ENCODE measurements at regions of chr1 and their contacts with region 1.

Region 1: GRCh38 chr1:109984456-109985275 is at the start of gene AHCYL1:
- DNase-seq: peak; percentile 94
- ATAC-seq: peak; percentile 95
- H3K4me3 ChIP-seq: peak within 1 kb of the TSS; percentile 79
- H3K27ac ChIP-seq: peak within 1 kb of the TSS; percentile 76
- H3K4me1 ChIP-seq: peaks cover 7% of the 10 kb centered on the region
- H3K27me3 ChIP-seq: no peaks in the 10 kb centered on the region
- CTCF ChIP-seq: peak; percentile 94 to 99 (median 95); a peak in 5 of 6 replicates
- EP300 ChIP-seq: peak in 1 of 2 experiments; percentile 54; a peak in 1 of 4 replicates
- POLR2A ChIP-seq: peak; percentile 98
- RAD21 ChIP-seq: peak; percentile 98
- polyA plus RNA-seq, gene AHCYL1: 24.7 to 26.1 TPM

Region 2: GRCh38 chr1:109636201-109636952 is 348.3 kb before region 1 on chr1:
- CTCF ChIA-PET with region 1: interaction called, 147 read pairs
- POLR2A ChIA-PET with region 1: no interaction called
- RAD21 ChIA-PET with region 1: interaction called, 66 read pairs
- SMC1A ChIA-PET with region 1: interaction called, 95 read pairs
- in situ Hi-C with region 1: loop called (anchors 5 kb)
- intact Hi-C with region 1: loop called (anchors 5 kb)
- DNase-seq: no peak
- ATAC-seq: no peak
- H3K4me3 ChIP-seq: no peak overlapping the region
- H3K27ac ChIP-seq: no peak overlapping the region
- H3K4me1 ChIP-seq: peaks cover 14% of the 10 kb centered on the region
- H3K27me3 ChIP-seq: no peaks in the 10 kb centered on the region
- CTCF ChIP-seq: no peak
- EP300 ChIP-seq: no peak
- POLR2A ChIP-seq: no peak
- RAD21 ChIP-seq: no peak

Region 3: GRCh38 chr1:109655601-109656519 is 328.8 kb before region 1 on chr1 and contains the start of gene GSTM4:
- CTCF ChIA-PET with region 1: interaction called, 53 read pairs
- POLR2A ChIA-PET with region 1: no interaction called
- RAD21 ChIA-PET with region 1: interaction called, 34 read pairs
- SMC1A ChIA-PET with region 1: interaction called, 15 read pairs
- in situ Hi-C with region 1: no loop called
- intact Hi-C with region 1: loop called (anchors 5 kb)
- DNase-seq: peak; percentile 47
- ATAC-seq: peak; percentile 95
- H3K4me3 ChIP-seq: peak within 1 kb of the TSS; percentile 75
- H3K27ac ChIP-seq: peak within 1 kb of the TSS; percentile 60
- H3K4me1 ChIP-seq: 0 out of 2 replicates have a peak, but pooled peaks cover 4% of the 10 kb centered on the region
- H3K27me3 ChIP-seq: no peaks in the 10 kb centered on the region
- CTCF ChIP-seq: no peak
- EP300 ChIP-seq: no peak
- POLR2A ChIP-seq: peak; percentile 77
- RAD21 ChIP-seq: no peak
- polyA plus RNA-seq, gene GSTM4: 16.9 to 17.0 TPM

Region 4: DNA sequence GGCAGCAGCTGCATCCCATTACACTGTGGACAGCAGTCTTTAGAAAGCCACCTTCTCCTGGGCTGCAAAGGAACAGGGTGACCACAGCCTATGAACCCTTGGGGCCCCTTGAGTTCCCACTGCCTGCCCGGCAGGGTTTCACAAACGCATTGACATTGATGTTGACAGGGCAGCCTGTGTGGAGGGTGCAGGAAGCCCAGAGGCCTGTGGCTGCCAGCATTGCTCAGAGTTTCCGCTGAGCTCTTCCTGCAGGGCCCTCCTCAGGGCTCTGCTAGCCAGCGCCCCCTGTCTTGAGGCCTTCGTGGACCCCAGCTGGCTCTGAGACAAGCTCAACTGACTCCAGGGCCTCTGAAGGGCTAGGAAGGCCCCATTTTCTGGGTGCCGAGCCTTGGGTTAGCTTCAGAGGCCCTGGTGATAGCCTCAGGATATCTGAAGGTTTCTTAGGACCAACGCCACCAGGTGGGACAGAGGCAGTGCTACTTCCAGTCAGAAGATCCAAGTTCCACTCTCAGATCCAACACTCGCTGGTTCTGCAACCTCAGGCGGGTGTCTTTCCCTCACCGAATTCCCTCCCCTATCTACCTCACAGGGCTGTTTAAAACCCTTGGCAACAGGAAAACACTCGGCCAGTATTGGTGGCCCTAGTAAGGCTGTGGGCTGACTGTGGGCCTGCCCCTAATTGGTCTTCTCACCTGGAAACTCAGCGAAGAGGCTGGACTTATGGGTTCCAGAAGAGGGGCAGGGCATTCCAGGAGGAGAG is 193.8 kb before region 1 on chr1:
- CTCF ChIA-PET with region 1: interaction called, 759 read pairs
- POLR2A ChIA-PET with region 1: interaction called, 3 read pairs
- RAD21 ChIA-PET with region 1: interaction called, 18 read pairs
- SMC1A ChIA-PET with region 1: interaction called, 431 read pairs
- in situ Hi-C with region 1: no loop called
- intact Hi-C with region 1: no loop called
- DNase-seq: peak; percentile 23
- ATAC-seq: peak; percentile 88
- H3K4me3 ChIP-seq: no peak overlapping the region
- H3K27ac ChIP-seq: peak overlapping the region; percentile 22
- H3K4me1 ChIP-seq: peaks cover 11% of the 10 kb centered on the region
- H3K27me3 ChIP-seq: no peaks in the 10 kb centered on the region; a peak in 1 of 4 replicates
- CTCF ChIP-seq: peak; percentile 32 to 51 (median 37); a peak in 5 of 6 replicates
- EP300 ChIP-seq: 0 out of 4 replicates have a peak, but pooled peaks of 1 of the 2 experiments have one; percentile 8
- POLR2A ChIP-seq: peak; percentile 49
- RAD21 ChIP-seq: peak; percentile 35; the same call in 1 of the 2 replicates

Region 5: DNA sequence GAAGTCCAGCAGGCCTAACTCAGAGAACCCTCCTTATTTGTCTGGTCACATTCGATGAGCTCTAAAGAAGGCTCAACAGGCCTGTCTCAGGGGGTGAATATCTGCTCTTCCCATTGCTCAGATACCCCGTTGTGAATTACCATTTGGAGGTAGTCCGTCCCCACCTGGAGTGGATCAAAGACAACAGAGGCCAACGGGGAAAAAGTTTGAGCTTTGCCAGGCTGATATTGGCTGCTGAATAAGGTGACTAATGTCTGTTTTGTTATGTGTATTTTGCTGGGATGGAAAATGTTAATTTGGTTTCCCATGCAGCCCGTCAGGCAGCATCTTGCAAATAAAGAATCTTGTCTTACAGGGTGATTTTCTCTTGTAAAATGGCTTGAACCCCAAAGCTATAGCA is 151.7 kb before region 1 on chr1:
- CTCF ChIA-PET with region 1: interaction called, 10 read pairs
- POLR2A ChIA-PET with region 1: no interaction called
- RAD21 ChIA-PET with region 1: no interaction called
- SMC1A ChIA-PET with region 1: interaction called, 4 read pairs
- in situ Hi-C with region 1: no loop called
- intact Hi-C with region 1: no loop called
- DNase-seq: no peak
- ATAC-seq: no peak
- H3K4me3 ChIP-seq: no peak overlapping the region
- H3K27ac ChIP-seq: no peak overlapping the region
- H3K4me1 ChIP-seq: no peaks in the 10 kb centered on the region
- H3K27me3 ChIP-seq: no peaks in the 10 kb centered on the region; a peak in 1 of 4 replicates
- CTCF ChIP-seq: no peak
- EP300 ChIP-seq: no peak
- POLR2A ChIP-seq: no peak
- RAD21 ChIP-seq: no peak

Region 6: GRCh38 chr1:109959974-109960744 is 24.5 kb before region 1 on chr1:
- CTCF ChIA-PET with region 1: interaction called, 13 read pairs
- POLR2A ChIA-PET with region 1: no interaction called
- RAD21 ChIA-PET with region 1: interaction called, 4 read pairs
- SMC1A ChIA-PET with region 1: interaction called, 5 read pairs
- in situ Hi-C with region 1: no loop called
- intact Hi-C with region 1: no loop called
- DNase-seq: no peak
- ATAC-seq: no peak
- H3K4me3 ChIP-seq: no peak overlapping the region
- H3K27ac ChIP-seq: no peak overlapping the region
- H3K4me1 ChIP-seq: no peaks in the 10 kb centered on the region
- H3K27me3 ChIP-seq: no peaks in the 10 kb centered on the region
- CTCF ChIP-seq: no peak
- EP300 ChIP-seq: no peak
- POLR2A ChIP-seq: no peak
- RAD21 ChIP-seq: no peak

Region 7: GRCh38 chr1:110034451-110035235 is 50.0 kb after region 1 on chr1 and contains the start of gene STRIP1:
- CTCF ChIA-PET with region 1: interaction called, 33 read pairs
- POLR2A ChIA-PET with region 1: interaction called, 9 read pairs
- RAD21 ChIA-PET with region 1: interaction called, 14 read pairs
- SMC1A ChIA-PET with region 1: interaction called, 15 read pairs
- in situ Hi-C with region 1: no loop called
- intact Hi-C with region 1: no loop called
- DNase-seq: peak; percentile 93
- ATAC-seq: peak; percentile 96
- H3K4me3 ChIP-seq: peak within 1 kb of the TSS; percentile 90
- H3K27ac ChIP-seq: peak within 1 kb of the TSS; percentile 84
- H3K4me1 ChIP-seq: peaks cover 19% of the 10 kb centered on the region
- H3K27me3 ChIP-seq: no peaks in the 10 kb centered on the region
- CTCF ChIP-seq: no peak
- EP300 ChIP-seq: no peak
- POLR2A ChIP-seq: peak; percentile 86
- RAD21 ChIP-seq: no peak
- polyA plus RNA-seq, gene STRIP1: 6.3 to 7.9 TPM

Region 8: DNA sequence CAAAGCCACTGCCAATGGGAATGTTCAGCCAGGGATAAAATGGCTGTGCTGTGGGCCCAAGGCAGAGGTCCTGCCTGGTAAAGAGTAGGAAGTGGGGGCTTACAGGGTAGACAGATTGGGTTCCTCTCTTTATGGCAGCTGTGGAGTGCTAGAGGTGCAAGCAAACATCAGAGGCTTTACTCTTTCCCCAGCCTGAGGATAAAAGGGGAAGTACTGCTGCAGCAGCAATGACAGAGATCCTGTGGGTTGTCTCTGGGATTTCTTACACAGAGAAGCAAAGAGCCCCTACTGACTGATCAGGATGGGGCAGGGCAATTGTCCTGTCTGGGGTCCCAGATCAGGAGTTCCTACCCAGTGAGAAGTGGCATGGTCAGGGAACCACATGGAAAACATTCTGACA is 1101.0 kb after region 1 on chr1:
- CTCF ChIA-PET with region 1: no interaction called
- POLR2A ChIA-PET with region 1: no interaction called
- RAD21 ChIA-PET with region 1: no interaction called
- SMC1A ChIA-PET with region 1: no interaction called
- in situ Hi-C with region 1: no loop called
- intact Hi-C with region 1: no loop called
- DNase-seq: no peak
- ATAC-seq: no peak
- H3K4me3 ChIP-seq: no peak overlapping the region
- H3K27ac ChIP-seq: no peak overlapping the region
- H3K4me1 ChIP-seq: no peaks in the 10 kb centered on the region
- H3K27me3 ChIP-seq: no peaks in the 10 kb centered on the region
- CTCF ChIP-seq: no peak
- EP300 ChIP-seq: no peak
- POLR2A ChIP-seq: no peak
- RAD21 ChIP-seq: no peak

Measured in GM12878 (cell line).